GM10248 (cell line): ENCODE measurements at regions of chr3 and their contacts with region 1.

Region 1: GRCh38 chr3:48898383-48899234 is at the start of gene SLC25A20:
- DNase-seq: peak; percentile 95
- CTCF ChIP-seq: peak; percentile 29

Region 2: DNA sequence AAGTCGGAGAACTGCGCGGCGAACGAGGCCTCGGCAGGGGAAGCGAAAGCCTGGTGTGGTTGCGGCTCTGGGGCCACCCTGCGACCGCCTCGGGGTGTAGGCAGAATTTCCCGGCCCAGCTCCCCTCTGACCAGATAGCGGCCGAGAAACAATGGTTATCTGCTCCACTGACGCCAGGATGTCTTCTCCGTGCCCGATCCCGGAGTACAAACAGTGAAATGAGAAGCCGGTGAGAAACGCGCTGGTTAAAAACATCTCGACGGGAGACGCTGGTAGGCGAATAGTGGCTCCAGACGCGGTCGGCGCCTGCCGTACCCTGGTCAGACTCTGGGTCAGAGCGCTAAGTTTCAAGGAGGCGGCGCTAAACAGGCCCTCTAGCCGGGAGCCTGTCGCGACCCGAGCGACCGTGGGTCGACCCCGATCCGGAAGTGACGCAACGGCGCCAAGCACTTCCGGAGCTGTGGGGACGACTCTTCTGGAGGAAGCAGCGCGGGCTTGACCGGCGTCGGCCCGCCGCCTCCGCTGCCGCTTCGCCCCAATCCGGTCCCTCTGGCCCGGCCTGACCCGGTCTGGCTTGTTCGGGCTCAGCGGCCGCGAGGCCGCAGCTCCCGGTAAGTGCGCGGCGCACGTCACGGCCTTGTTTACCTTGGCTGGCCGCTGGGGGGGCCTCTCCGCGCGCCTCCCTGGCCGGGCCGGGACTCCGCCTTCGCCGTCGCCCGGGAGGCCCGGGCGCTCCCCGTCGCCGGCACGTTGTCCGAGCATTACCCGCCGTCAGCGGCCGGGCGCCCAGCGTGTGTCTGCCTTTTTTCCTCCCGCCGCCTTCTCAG is 20.0 kb after region 1 on chr3 and contains the start of gene ARIH2:
- CTCF ChIA-PET with region 1: interaction called, 11 read pairs
- POLR2A ChIA-PET with region 1: interaction called, 4 read pairs
- DNase-seq: peak; percentile 97
- CTCF ChIP-seq: peak; percentile 34